Activated T-helper 1 cell treated with anti-CD3 and anti-CD28 coated beads, Interleukin-12 subunit alpha, Interleukin-12 subunit beta, Interleukin-2, Interleukin-4 antibody, amounts not matched to agents 30 ng/mL and 10 ng/mL and 1 ng/mL, durations not matched to agents 14 hours and 24 hours and 36 hours (primary cell): ENCODE measurements at regions of chr11 and their contacts with region 1.

Region 1: GRCh38 chr11:93697611-93698010 is 36.1 kb downstream of the CEP295 start:
- DNase-seq: no peak
- H3K4me3 Mint-ChIP-seq: no peak overlapping the region
- H3K27ac Mint-ChIP-seq: no peak overlapping the region
- H3K4me1 Mint-ChIP-seq: peaks cover 10% of the 10 kb centered on the region
- H3K27me3 Mint-ChIP-seq: no peaks in the 10 kb centered on the region

Region 2: DNA sequence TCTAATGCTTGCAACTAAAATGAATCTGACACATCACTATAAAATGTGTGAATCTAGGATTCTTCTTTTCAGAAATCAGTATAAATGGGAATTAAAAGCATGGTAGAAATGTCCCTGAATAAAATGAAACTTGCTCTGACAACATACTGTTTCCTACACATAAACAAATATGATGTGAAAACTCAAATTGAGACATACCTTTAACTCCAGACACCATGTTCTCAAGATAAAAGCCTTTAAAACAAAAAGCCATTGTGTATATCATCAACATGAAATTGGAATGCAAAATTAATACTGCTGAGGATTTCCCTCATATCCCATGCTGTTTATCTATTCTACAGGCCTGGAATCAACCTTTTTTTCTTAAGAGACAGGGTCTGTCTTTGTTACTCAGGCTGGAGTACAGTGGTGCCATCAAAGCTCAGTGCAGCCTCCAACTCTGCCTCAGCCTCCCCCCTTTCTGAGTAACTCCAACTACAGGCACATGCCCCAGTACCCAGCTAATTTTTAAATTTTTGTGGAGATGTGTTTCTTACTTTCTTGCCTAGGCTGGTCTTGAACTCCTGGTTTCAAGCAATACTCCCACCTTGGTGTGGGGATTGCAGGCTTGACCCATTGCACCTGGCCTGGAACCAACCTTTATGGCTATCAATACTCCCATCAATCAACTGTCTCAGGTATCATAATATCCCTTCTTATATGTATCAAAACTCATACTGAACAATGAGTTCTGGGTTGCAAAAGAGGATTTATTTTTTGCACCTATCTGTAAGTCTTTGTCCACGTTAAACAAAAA is 37.0 kb after region 1 on chr11:
- intact Hi-C with region 1: loop called (anchors 5 kb)
- DNase-seq: no peak
- H3K4me3 Mint-ChIP-seq: peak overlapping the region; percentile 59
- H3K27ac Mint-ChIP-seq: no peak overlapping the region
- H3K4me1 Mint-ChIP-seq: peaks cover 79% of the 10 kb centered on the region
- H3K27me3 Mint-ChIP-seq: no peaks in the 10 kb centered on the region

Region 3: DNA sequence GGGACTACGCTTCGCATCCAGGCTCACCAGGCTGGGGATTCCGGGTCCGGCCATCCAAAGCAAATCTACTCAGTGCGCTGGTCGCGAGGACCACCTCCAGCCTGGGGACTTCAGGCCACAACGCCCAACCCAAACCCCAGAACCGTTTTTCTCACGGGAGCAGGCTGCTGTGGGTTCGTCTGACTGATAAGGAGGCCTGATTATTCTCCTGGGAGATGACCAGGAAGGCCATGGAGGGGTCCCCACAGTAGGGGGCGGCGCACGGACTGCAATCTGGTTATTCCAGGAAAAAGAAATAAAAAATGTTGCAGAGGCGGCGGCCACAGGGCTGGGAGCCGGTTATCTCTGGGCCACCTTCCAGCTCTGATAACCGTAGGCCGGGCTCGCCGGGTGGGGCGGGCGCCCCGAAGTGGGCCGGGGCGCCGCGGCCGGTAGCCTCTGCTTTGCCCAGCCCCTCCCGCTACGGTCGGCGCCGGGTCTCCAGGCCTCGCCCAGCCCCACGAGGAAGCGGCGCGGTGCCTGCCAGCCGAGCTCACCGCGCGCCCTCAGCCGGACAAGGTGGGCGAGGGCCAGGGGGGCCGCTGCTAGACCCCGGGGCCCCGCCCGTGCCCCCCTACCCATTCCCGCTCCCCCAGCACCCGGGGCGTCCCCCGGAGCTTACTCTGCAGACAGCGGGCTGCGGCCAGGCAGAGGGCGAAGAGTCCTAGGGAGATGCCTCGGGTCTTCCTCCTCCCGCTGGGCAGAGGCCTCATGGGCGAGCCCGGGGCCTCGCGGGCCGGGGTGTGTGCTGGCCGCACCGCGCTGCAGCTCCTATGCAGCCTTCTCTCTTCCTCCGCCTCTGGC is 152.4 kb after region 1 on chr11:
- intact Hi-C with region 1: no loop called
- DNase-seq: no peak
- H3K4me3 Mint-ChIP-seq: no peak overlapping the region
- H3K27ac Mint-ChIP-seq: no peak overlapping the region
- H3K4me1 Mint-ChIP-seq: no peaks in the 10 kb centered on the region
- H3K27me3 Mint-ChIP-seq: peaks cover 29% of the 10 kb centered on the region